H1 (cell line): ENCODE measurements at regions of chr1 and their contacts with region 1.

Region 1: GRCh38 chr1:47624531-47624930 is 186.7 kb downstream of the FOXD2 start:
- DNase-seq: peak; percentile 29 to 55
- H3K4me3 ChIP-seq: no peak overlapping the region
- H3K27ac ChIP-seq: no peak overlapping the region
- H3K4me1 ChIP-seq: no peaks in the 10 kb centered on the region; a peak in 1 of 7 replicates
- H3K27me3 ChIP-seq: peaks cover 0 to 2% (median 0%) of the 10 kb centered on the region in 4 experiments; a peak in 2 of 7 replicates
- CTCF ChIP-seq: peak; percentile 83 to 99 (median 91)
- EP300 ChIP-seq: no peak
- POLR2A ChIP-seq: no peak
- RAD21 ChIP-seq: peak; percentile 84 to 86

Region 2: GRCh38 chr1:47405697-47406096 is 218.8 kb before region 1 on chr1:
- CTCF ChIA-PET with region 1: no interaction called
- POLR2A ChIA-PET with region 1: no interaction called
- DNase-seq: no peak
- H3K4me3 ChIP-seq: no peak overlapping the region
- H3K27ac ChIP-seq: no peak overlapping the region
- H3K4me1 ChIP-seq: no peaks in the 10 kb centered on the region; a peak in 1 of 7 replicates
- H3K27me3 ChIP-seq: peaks cover 0 to 6% (median 1%) of the 10 kb centered on the region in 4 experiments; a peak in 4 of 7 replicates
- CTCF ChIP-seq: no peak
- EP300 ChIP-seq: no peak
- POLR2A ChIP-seq: no peak
- RAD21 ChIP-seq: no peak

Region 3: DNA sequence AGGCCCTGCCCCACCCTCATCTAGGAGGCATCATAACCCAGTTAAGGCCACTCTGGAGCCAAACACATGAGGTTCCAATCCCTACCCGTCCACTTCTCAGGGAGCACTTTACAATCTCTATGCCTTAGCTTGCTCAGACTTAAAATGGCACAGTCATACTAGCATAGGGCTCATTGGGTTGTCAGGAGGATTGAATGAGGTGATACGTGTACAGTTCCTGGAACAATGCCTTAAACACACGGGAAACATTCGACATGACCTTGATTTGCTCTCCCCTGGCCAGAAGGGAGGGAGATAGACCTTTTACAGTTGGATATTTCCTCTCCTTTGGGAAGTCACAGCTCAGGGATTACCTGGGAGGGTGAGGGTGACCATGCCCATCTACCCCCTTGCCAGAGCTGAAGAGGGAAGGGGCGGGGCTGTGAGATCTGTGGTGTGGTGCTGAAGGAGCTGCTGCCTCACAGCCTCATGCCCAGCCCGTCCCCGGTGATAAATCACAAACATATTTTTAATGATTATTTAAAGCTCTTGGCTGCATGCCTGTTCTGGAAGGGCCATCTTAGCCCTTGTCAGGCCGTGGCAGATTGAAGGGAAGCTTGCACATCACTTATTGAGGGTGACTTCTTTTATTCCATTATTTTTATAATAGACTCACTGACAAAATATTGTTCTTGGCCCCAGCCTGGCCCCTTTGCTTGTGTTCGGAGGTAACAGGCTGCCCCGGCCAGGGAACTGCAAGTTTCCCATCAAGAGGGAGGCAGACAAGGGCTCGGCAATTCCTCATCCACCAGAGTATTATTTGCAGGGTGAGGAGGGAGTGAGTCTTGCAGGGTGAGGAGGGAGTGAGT is 103.3 kb before region 1 on chr1:
- CTCF ChIA-PET with region 1: interaction called, 151 read pairs
- POLR2A ChIA-PET with region 1: no interaction called
- DNase-seq: no peak
- H3K4me3 ChIP-seq: no peak overlapping the region
- H3K27ac ChIP-seq: no peak overlapping the region
- H3K4me1 ChIP-seq: peaks cover 3 to 16% (median 6%) of the 10 kb centered on the region in 4 experiments; a peak in 6 of 7 replicates
- H3K27me3 ChIP-seq: peaks cover 0 to 4% (median 0%) of the 10 kb centered on the region in 4 experiments; a peak in 4 of 7 replicates
- CTCF ChIP-seq: no peak
- EP300 ChIP-seq: no peak
- POLR2A ChIP-seq: no peak
- RAD21 ChIP-seq: no peak

Region 4: GRCh38 chr1:47558601-47559593 is 65.6 kb before region 1 on chr1:
- CTCF ChIA-PET with region 1: interaction called, 12 read pairs
- POLR2A ChIA-PET with region 1: no interaction called
- DNase-seq: no peak
- H3K4me3 ChIP-seq: no peak overlapping the region
- H3K27ac ChIP-seq: no peak overlapping the region
- H3K4me1 ChIP-seq: peaks cover 0 to 15% (median 4%) of the 10 kb centered on the region in 4 experiments; a peak in 3 of 7 replicates
- H3K27me3 ChIP-seq: peaks cover 0 to 3% (median 0%) of the 10 kb centered on the region in 4 experiments; a peak in 3 of 7 replicates
- CTCF ChIP-seq: no peak
- EP300 ChIP-seq: no peak
- POLR2A ChIP-seq: no peak
- RAD21 ChIP-seq: no peak

Region 5: GRCh38 chr1:47650197-47650596 is 25.7 kb after region 1 on chr1:
- CTCF ChIA-PET with region 1: interaction called, 17 read pairs
- POLR2A ChIA-PET with region 1: no interaction called
- DNase-seq: no peak
- H3K4me3 ChIP-seq: no peak overlapping the region
- H3K27ac ChIP-seq: no peak overlapping the region
- H3K4me1 ChIP-seq: no peaks in the 10 kb centered on the region
- H3K27me3 ChIP-seq: 0 out of 7 replicates have a peak, but pooled peaks cover 0 to 3% (median 0%) of the 10 kb centered on the region in 4 experiments
- CTCF ChIP-seq: no peak
- EP300 ChIP-seq: no peak
- POLR2A ChIP-seq: no peak
- RAD21 ChIP-seq: no peak

Region 6: DNA sequence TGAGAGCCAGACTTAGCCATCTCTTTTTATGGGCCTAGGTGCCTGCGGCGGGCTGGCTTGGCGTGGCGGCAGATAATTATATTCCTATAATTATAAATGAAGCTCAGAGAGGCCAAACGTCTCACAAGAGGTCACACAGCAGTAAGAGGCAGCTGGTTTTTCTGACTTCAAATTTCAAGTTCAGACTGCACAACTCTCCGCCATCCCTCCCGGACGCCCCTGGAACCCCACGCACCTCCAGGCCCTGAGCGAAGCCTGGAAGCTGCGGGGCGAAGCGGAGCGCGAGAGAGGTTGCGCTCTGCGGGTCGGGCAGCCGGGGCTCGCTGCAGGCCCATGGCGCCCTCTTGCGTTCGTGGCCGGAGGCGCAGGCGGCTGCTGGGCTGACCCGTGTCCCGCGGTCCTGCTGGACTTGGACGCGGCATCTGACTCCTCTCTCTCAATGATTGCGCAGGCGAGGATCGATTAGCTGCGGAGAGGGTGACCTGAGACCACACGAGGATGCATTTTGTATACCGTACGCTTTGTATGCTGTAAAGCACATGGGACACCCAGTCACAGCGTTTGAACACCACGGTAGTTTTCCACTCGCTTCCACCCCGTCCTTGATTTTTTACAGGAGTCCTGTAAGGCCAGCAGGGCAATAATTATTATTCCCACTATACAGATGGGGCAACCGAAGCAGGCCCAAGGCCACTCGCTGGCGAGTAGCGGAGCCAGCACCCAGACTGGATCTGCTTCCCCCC is 86.0 kb after region 1 on chr1:
- CTCF ChIA-PET with region 1: interaction called, 49 read pairs
- POLR2A ChIA-PET with region 1: no interaction called
- DNase-seq: peak in 1 of 2 experiments; percentile 97
- H3K4me3 ChIP-seq: peak overlapping the region; percentile 20 to 63 (median 47); a peak in 4 of 8 replicates
- H3K27ac ChIP-seq: no peak overlapping the region
- H3K4me1 ChIP-seq: peaks cover 0 to 19% (median 5%) of the 10 kb centered on the region in 4 experiments; a peak in 3 of 7 replicates
- H3K27me3 ChIP-seq: peaks cover 44 to 74% (median 71%) of the 10 kb centered on the region in 4 experiments
- CTCF ChIP-seq: peak; percentile 93 to 97 (median 97)
- EP300 ChIP-seq: no peak
- POLR2A ChIP-seq: no peak
- RAD21 ChIP-seq: peak; percentile 93 to 96